AG04449 (cell line): ENCODE measurements at regions of chr3 and their contacts with region 1.

Region 1: GRCh38 chr3:69161587-69162307 is 39.4 kb upstream of the LMOD3 start:
- DNase-seq: no peak
- H3K4me3 ChIP-seq: no peak overlapping the region
- CTCF ChIP-seq: peak; percentile 71

Region 2: GRCh38 chr3:68912376-68912775 is 249.4 kb before region 1 on chr3:
- CTCF ChIA-PET with region 1: no interaction called
- POLR2A ChIA-PET with region 1: no interaction called
- DNase-seq: no peak
- H3K4me3 ChIP-seq: no peak overlapping the region
- CTCF ChIP-seq: no peak

Region 3: DNA sequence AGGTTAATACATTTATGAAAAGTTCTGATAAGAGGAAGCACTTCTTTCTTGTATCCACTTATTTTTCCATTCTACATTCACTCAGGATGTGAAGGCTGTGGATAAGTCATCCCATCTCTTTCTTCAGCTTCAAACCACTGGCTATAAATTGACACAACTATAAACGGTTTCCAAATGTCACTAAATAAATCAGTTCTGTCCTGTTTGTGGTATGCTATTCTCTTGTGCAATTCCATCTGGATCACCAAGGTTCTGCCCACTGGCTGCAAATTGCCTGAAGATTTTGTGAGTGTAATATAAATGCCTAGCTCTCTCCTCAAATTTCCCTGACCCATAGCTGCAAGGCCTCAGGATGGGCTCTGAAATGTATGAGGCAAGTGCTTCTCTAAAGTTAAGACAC is 32.2 kb before region 1 on chr3:
- CTCF ChIA-PET with region 1: interaction called, 10 read pairs
- POLR2A ChIA-PET with region 1: no interaction called
- DNase-seq: no peak
- H3K4me3 ChIP-seq: no peak overlapping the region
- CTCF ChIP-seq: no peak

Region 4: DNA sequence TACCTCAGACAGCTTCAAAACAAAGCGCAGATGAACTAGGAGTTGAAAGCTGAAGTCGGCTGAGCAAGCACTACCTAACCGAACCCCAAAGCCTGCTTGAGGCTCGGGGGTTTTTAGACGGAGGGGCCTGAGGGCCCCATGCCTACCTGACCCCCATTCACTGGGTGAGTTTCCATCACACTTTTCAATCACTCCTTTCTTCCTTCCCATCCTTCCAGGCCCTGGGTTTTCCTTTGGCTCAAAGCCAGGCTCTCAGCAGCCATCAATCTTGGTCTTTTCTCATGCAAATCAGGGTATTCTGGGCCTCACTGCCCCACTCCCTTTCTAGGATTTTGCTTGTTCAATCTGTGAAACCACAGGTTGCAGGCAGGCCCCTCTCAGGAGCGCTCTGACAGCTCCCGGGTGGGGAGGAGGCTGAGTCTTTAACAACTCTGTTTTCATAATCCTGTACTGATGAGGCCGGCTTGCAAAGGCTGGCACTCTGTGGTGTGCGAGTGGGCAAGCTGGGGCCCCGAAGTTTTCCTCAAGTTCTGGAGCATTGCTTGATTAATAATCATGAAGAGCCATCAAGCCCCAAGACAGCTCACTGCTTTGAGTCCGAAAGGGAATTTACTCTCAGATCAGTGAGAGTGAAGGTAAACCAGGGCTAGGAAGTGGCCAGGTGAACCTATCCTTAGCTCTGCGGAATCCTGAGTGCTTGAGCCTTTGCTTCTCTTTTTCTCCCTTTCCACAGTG is 126.6 kb after region 1 on chr3:
- CTCF ChIA-PET with region 1: interaction called, 19 read pairs
- POLR2A ChIA-PET with region 1: no interaction called
- DNase-seq: no peak
- H3K4me3 ChIP-seq: no peak overlapping the region
- CTCF ChIP-seq: no peak

Region 5: GRCh38 chr3:69324362-69325025 is 162.7 kb after region 1 on chr3:
- CTCF ChIA-PET with region 1: interaction called, 11 read pairs
- POLR2A ChIA-PET with region 1: no interaction called
- DNase-seq: no peak
- H3K4me3 ChIP-seq: no peak overlapping the region
- CTCF ChIP-seq: peak; percentile 3

Region 6: DNA sequence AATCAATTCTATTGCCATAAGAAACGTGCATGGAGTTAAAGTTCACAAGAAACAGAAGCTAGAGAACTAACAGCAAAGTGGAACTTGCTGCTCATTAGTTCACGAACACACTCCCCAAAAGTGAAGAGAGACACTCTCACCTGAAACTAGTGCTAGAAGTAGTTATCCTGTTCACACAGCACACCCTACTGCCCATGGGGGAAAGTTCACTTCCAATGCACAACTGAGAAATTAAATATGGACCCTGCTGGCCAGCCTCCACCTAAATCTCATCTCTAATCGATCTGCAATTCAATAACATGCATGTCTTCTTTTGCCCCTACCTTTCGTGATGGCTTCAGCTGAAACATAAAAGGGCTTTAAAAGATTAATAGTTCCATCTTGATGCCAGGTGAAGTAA is 263.5 kb after region 1 on chr3:
- CTCF ChIA-PET with region 1: interaction called, 254 read pairs
- POLR2A ChIA-PET with region 1: no interaction called
- DNase-seq: no peak
- H3K4me3 ChIP-seq: no peak overlapping the region
- CTCF ChIP-seq: peak; percentile 66

Region 7: DNA sequence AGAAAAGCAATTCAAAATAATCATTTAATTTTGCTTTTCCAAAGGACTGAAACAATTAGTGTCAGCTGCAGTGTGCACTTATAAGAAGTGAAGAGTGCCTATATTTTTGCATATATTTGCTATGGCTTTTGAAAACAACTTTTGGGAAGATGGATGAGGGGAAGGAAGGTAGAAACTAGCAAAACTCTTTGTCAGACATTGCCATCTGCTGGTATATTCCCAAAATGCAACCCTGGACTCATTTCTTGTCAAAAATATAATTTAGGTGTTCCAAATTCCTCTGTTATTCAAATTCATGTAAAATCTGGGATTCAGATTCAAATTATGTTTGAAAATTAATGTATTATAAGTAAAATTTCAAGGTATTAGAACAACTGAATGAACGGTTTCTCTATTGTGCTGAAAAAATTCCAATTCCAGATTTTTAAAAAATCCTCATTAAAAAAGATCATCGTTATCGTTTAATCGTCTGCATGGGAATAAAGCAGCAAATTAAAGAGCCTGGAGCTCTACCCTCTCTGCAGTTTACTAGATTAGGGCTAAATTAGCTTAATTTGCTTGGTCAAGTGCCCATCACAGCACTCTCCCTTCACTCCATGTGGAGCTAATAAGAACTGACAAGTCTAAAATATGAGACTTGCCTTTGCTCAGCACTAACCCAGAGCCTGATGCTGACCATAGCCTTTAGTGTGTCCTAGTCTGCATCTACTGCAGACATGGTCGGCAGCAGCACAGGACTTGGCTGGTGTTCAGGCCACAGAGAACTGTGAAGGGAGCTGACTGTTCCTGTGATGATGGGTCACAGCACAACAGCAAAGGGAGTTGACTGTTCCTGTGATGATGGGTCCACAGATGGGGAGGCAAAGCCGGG is 509.6 kb after region 1 on chr3:
- CTCF ChIA-PET with region 1: interaction called, 37 read pairs
- POLR2A ChIA-PET with region 1: no interaction called
- DNase-seq: no peak
- H3K4me3 ChIP-seq: no peak overlapping the region
- CTCF ChIP-seq: peak; percentile 46